K562 (cell line): ENCODE measurements at regions of chr2 and their contacts with region 1.

Region 1: GRCh38 chr2:12277241-12278034 is 439.3 kb upstream of the TRIB2 start:
- DNase-seq: peak; percentile 81 to 96 (median 87)
- ATAC-seq: peak; percentile 78
- H3K4me3 ChIP-seq: peak overlapping the region; percentile 39
- H3K27ac ChIP-seq: peak overlapping the region; percentile 90
- H3K4me1 ChIP-seq: peaks cover 0 to 6% of the 10 kb centered on the region in 2 experiments; a peak in 2 of 5 replicates
- H3K27me3 ChIP-seq: no peaks in the 10 kb centered on the region
- CTCF ChIP-seq: no peak
- EP300 ChIP-seq: peak; percentile 95
- POLR2A ChIP-seq: peak; percentile 85
- RAD21 ChIP-seq: peak in 1 of 2 experiments; percentile 29; a peak in 2 of 4 replicates

Region 2: DNA sequence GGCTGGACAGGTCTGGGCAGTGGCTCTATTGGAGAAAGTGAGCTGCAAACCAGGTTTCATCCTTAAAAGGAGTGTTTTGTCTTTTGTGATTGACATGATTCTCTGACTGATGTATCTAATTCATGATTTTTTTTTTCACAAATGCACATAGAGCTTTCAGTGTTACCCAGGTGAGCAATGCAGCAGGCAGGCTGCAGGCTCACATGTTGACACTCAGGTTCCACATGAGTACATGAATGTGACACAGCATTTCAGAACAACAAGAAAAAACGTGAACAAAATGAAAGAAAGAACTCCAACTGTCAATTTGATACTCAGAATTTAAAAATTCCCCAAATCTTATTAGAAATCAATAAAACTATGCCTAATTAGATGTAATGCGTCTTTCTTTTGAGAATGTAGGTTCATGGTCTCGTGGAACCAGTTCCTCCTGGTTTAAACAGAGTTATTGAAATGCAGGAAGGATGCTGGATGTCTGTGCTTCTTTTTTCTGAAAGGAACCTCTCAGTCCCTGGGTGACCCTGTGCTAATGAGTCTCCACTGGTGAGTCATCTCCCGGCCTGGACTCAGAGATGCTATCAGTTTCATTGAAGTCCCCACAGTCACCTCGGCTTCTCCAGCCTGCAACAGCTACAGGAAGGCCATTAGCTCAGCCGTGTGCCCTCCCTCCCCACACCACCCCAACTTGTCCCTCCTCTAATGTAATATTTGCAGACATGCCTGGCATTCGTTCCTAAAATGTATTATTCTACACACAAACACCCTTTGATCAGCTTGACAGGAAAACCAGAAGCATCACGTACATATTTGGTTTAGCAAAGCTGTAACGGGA is 100.6 kb before region 1 on chr2:
- CTCF ChIA-PET with region 1: no interaction called
- POLR2A ChIA-PET with region 1: interaction called, 10 read pairs
- in situ Hi-C with region 1: no loop called
- intact Hi-C with region 1: loop called (anchors 2 kb)
- DNase-seq: peak; percentile 88 to 94 (median 91)
- ATAC-seq: peak; percentile 97
- H3K4me3 ChIP-seq: no peak overlapping the region
- H3K27ac ChIP-seq: peak overlapping the region; percentile 70
- H3K4me1 ChIP-seq: peaks cover 21 to 32% of the 10 kb centered on the region in 2 experiments
- H3K27me3 ChIP-seq: no peaks in the 10 kb centered on the region
- CTCF ChIP-seq: no peak
- EP300 ChIP-seq: peak; percentile 85
- POLR2A ChIP-seq: no peak
- RAD21 ChIP-seq: peak; percentile 12 to 23; a peak in 2 of 4 replicates

Region 3: DNA sequence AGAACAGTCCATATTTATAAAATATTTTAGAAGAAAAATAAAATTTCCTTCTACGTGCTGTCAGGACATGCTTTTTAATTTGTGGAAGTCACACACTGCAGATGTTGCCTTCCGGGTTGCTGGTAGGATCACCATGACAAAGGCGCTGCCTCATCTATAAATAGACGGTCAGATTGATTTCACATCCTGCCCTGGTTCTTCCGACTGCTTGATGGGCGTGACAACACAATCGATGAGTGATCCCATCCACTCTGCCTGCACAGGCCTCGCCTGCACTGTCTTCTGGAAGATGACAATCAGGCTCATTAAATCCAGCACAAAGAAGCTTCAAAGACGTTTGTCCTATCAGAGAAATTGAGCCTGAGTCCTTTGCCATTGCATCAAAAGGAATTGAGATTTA is 120.4 kb after region 1 on chr2:
- CTCF ChIA-PET with region 1: no interaction called
- POLR2A ChIA-PET with region 1: no interaction called
- in situ Hi-C with region 1: no loop called
- intact Hi-C with region 1: no loop called
- DNase-seq: no peak
- ATAC-seq: no peak
- H3K4me3 ChIP-seq: no peak overlapping the region
- H3K27ac ChIP-seq: no peak overlapping the region
- H3K4me1 ChIP-seq: no peaks in the 10 kb centered on the region; a peak in 2 of 5 replicates
- H3K27me3 ChIP-seq: no peaks in the 10 kb centered on the region
- CTCF ChIP-seq: no peak
- EP300 ChIP-seq: no peak
- POLR2A ChIP-seq: no peak
- RAD21 ChIP-seq: no peak